ENCODE measurements at regions of chr2 and their contacts with region 1.

Region 1: GRCh38 chr2:237026981-237027711 is 58.5 kb upstream of the COPS8 start:
- DNase-seq: peak; percentile 38 to 83
- H3K4me3 ChIP-seq: no peak overlapping the region
- H3K27ac ChIP-seq: no peak overlapping the region
- H3K4me1 ChIP-seq: no peaks in the 10 kb centered on the region
- H3K27me3 ChIP-seq: no peaks in the 10 kb centered on the region
- CTCF ChIP-seq: peak; percentile 71 to 86 (median 80)

Region 2: GRCh38 chr2:236782938-236783337 is 244.2 kb before region 1 on chr2:
- intact Hi-C with region 1: loop called (anchors 10 kb)
- DNase-seq: no peak
- H3K4me3 ChIP-seq: no peak overlapping the region
- H3K27ac ChIP-seq: no peak overlapping the region
- H3K4me1 ChIP-seq: peaks cover 0 to 15% of the 10 kb centered on the region in 2 donors
- H3K27me3 ChIP-seq: no peaks in the 10 kb centered on the region
- CTCF ChIP-seq: no peak

Region 3: DNA sequence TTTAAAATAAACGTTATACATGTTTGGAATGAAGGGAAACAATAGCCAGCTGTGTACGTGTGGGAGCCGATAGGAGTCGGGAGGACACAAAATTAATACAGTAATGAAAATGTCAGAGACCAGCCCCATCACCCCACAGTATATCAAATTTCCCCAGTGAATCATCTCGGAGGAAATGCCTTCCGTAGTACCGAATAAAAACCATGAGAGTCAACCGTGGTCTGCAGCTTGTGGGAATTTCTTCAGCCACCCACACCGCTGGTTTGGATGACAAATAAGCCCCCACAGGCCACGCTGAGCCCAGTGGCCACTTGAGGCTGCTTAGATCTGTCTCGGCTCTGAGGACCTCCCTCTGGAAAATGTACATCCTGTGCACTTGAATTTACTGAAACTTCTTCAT is 253.1 kb after region 1 on chr2:
- intact Hi-C with region 1: no loop called
- DNase-seq: no peak
- H3K4me3 ChIP-seq: no peak overlapping the region
- H3K27ac ChIP-seq: peak overlapping the region in 1 of 2 donors; percentile 13
- H3K4me1 ChIP-seq: peaks cover 0 to 11% of the 10 kb centered on the region in 2 donors
- H3K27me3 ChIP-seq: no peaks in the 10 kb centered on the region
- CTCF ChIP-seq: no peak

Measured in ascending aorta (tissue), 2 donors.